Natural killer cell (primary cell): ENCODE measurements at regions of chr16 and their contacts with region 1.

Region 1: DNA sequence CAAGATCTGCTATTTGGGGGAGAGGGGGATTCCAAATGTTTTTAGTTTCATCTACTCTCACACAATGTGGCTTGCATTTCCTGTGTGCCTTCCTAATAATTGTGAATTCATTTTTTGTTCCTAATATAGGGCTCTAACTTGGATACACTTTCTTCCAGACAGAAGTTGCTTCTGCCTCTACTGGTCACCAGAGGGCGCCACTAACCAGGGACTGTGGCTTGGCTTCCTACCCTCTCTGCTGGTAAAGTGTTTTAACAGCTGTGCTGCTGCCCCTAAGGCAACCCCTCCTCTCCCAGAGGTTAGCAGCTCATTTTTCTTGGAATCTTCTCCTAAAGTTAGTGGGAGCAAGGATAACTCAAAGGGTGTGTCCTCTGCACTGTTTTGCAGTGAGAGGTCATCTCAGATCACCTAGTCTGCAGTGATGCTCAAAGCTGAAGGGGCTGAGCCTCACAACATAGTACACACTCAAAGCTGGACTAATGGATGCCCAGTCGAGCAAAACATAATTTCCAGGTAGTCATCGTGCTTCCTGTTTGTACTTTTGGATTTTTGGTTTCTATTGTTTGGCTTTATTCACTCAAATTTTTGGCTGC is 5.0 kb upstream of the PRSS54 start:
- DNase-seq: peak in 1 of 2 donors; percentile 36
- ATAC-seq: peak in 2 of 3 donors; percentile 55 to 64
- H3K4me3 ChIP-seq: no peak overlapping the region
- H3K4me3 Mint-ChIP-seq: no peak overlapping the region
- H3K27ac ChIP-seq: no peak overlapping the region
- H3K27ac Mint-ChIP-seq: no peak overlapping the region
- H3K4me1 ChIP-seq: no peaks in the 10 kb centered on the region
- H3K4me1 Mint-ChIP-seq: no peaks in the 10 kb centered on the region
- H3K27me3 ChIP-seq: no peaks in the 10 kb centered on the region
- H3K27me3 Mint-ChIP-seq: peaks cover 14 to 32% of the 10 kb centered on the region in 2 donors
- CTCF ChIP-seq: peak; percentile 72

Region 2: DNA sequence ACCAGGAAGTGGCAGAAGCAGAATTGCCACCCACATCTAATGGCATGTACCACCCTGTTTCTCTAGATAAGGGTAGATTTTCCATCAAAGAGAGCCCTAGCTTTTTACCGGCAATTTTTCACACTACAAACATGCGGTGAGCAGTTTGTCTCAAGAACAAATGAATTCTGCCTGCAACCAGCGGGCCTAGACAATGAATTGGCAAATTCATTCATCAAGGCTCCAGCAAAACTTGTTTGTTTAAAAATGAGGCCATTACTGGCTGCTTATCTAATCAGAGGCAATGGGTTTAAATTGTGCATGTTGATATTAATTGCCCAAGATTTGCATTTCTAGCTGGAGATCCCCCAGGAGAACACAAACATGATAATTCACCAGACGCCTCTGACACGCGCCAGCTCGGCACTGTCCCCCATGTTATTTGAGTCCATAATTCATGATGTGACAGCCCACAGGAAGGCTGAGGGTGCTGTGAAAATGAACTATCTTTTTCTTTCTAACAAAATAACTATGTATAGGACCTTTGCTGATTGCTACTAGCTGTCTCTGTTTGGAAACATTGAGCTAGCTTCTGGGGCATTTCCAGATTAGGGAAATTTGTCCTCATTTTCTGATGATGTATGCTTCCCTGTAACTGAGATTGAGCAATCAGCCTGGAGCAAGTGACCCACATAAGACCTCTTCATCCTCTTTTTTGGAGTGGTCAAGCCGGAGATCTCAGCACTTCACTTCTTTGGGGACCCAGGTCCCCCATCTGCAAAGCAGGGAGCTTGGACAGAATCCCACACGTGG is 409.7 kb before region 1 on chr16:
- intact Hi-C with region 1: loop called (anchors 10 kb)
- DNase-seq: no peak
- ATAC-seq: peak; percentile 49 to 62 (median 54)
- H3K4me3 ChIP-seq: no peak overlapping the region
- H3K4me3 Mint-ChIP-seq: peak overlapping the region; percentile 72
- H3K27ac ChIP-seq: peak overlapping the region; percentile 66
- H3K27ac Mint-ChIP-seq: peak overlapping the region; percentile 89 to 92
- H3K4me1 ChIP-seq: peaks cover 46% of the 10 kb centered on the region
- H3K4me1 Mint-ChIP-seq: peaks cover 54 to 56% of the 10 kb centered on the region in 2 donors
- H3K27me3 ChIP-seq: peaks cover 2% of the 10 kb centered on the region
- H3K27me3 Mint-ChIP-seq: peaks cover 0 to 3% of the 10 kb centered on the region in 2 donors
- CTCF ChIP-seq: no peak

Region 3: GRCh38 chr16:58222532-58223316 is 77.1 kb before region 1 on chr16:
- intact Hi-C with region 1: no loop called
- DNase-seq: no peak
- ATAC-seq: no peak
- H3K4me3 ChIP-seq: no peak overlapping the region
- H3K4me3 Mint-ChIP-seq: no peak overlapping the region
- H3K27ac ChIP-seq: no peak overlapping the region
- H3K27ac Mint-ChIP-seq: no peak overlapping the region
- H3K4me1 ChIP-seq: no peaks in the 10 kb centered on the region
- H3K4me1 Mint-ChIP-seq: no peaks in the 10 kb centered on the region
- H3K27me3 ChIP-seq: no peaks in the 10 kb centered on the region
- H3K27me3 Mint-ChIP-seq: peaks cover 24 to 54% of the 10 kb centered on the region in 2 donors
- CTCF ChIP-seq: no peak